ENCODE measurements at regions of chr7 and their contacts with region 1.

Region 1: GRCh38 chr7:127819975-127820731 is 168.2 kb downstream of the SND1 start:
- DNase-seq: peak; percentile 40 to 61 (median 50)
- ATAC-seq: peak; percentile 27
- H3K4me3 ChIP-seq: no peak overlapping the region
- H3K27ac ChIP-seq: peak overlapping the region; percentile 18
- H3K4me1 ChIP-seq: peaks cover 0 to 46% of the 10 kb centered on the region in 2 experiments
- H3K27me3 ChIP-seq: no peaks in the 10 kb centered on the region
- CTCF ChIP-seq: no peak
- EP300 ChIP-seq: 0 out of 2 replicates have a peak, but pooled peaks have one; percentile 5
- POLR2A ChIP-seq: no peak
- RAD21 ChIP-seq: no peak

Region 2: DNA sequence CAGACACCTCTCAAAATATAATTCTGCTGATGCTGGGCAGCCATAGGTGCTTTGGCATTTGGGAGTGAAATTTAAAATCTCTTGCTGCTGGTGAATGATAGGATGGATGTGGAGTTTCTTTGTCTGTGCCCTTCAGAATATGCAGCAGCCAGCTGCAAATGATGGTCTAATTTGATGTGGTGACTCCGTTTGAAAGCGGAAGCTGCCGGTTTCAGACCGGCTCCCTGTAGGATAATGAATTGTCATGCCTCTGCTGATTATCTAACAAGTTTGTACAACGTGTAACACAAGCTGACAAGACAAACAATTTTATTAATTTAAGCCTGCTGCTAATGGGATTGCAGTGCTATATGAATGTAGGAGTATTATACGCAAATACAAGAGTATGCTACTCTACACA is 64.6 kb before region 1 on chr7:
- CTCF ChIA-PET with region 1: no interaction called
- POLR2A ChIA-PET with region 1: no interaction called
- in situ Hi-C with region 1: no loop called
- intact Hi-C with region 1: no loop called
- DNase-seq: no peak
- ATAC-seq: no peak
- H3K4me3 ChIP-seq: no peak overlapping the region
- H3K27ac ChIP-seq: no peak overlapping the region
- H3K4me1 ChIP-seq: peaks cover 3 to 7% of the 10 kb centered on the region in 2 experiments; a peak in 2 of 5 replicates
- H3K27me3 ChIP-seq: no peaks in the 10 kb centered on the region
- CTCF ChIP-seq: no peak
- EP300 ChIP-seq: no peak
- POLR2A ChIP-seq: no peak
- RAD21 ChIP-seq: no peak

Region 3: DNA sequence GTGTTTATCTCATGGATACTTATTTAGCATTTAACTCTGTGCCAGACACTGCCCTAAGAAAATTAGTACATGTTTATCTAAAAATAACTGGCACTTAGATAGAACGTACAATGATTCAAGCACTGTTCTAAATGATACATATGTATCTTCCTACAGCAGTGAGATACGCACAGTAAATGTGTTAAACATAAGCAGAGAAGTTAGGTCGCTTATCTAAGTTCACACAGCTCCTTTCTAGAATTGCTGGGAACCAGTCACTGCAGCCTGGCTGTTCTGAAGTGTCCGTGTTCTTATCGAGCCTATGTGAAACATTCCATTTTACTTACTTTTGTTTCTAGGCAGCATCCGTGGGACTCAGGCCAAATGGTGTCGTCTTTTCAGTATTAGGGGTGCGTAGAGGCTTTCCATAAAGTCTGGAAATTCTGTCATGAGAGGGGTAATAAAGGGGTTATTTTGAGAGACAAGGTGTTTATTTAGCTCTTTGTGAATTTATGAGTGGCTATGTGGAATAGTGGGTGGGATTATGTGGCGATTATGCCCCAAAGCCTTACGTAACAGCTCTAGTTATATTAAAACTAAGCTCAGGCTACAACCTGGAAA is 18.8 kb after region 1 on chr7:
- CTCF ChIA-PET with region 1: no interaction called
- POLR2A ChIA-PET with region 1: interaction called, 8 read pairs
- in situ Hi-C with region 1: no loop called
- intact Hi-C with region 1: loop called (anchors 1 kb)
- DNase-seq: peak; percentile 57 to 94 (median 78)
- ATAC-seq: peak; percentile 98
- H3K4me3 ChIP-seq: no peak overlapping the region
- H3K27ac ChIP-seq: peak overlapping the region; percentile 55
- H3K4me1 ChIP-seq: peaks cover 0 to 24% of the 10 kb centered on the region in 2 experiments; a peak in 4 of 5 replicates
- H3K27me3 ChIP-seq: no peaks in the 10 kb centered on the region
- CTCF ChIP-seq: no peak
- EP300 ChIP-seq: peak; percentile 92
- POLR2A ChIP-seq: no peak
- RAD21 ChIP-seq: peak in 1 of 2 experiments; percentile 21; a peak in 2 of 4 replicates

Region 4: DNA sequence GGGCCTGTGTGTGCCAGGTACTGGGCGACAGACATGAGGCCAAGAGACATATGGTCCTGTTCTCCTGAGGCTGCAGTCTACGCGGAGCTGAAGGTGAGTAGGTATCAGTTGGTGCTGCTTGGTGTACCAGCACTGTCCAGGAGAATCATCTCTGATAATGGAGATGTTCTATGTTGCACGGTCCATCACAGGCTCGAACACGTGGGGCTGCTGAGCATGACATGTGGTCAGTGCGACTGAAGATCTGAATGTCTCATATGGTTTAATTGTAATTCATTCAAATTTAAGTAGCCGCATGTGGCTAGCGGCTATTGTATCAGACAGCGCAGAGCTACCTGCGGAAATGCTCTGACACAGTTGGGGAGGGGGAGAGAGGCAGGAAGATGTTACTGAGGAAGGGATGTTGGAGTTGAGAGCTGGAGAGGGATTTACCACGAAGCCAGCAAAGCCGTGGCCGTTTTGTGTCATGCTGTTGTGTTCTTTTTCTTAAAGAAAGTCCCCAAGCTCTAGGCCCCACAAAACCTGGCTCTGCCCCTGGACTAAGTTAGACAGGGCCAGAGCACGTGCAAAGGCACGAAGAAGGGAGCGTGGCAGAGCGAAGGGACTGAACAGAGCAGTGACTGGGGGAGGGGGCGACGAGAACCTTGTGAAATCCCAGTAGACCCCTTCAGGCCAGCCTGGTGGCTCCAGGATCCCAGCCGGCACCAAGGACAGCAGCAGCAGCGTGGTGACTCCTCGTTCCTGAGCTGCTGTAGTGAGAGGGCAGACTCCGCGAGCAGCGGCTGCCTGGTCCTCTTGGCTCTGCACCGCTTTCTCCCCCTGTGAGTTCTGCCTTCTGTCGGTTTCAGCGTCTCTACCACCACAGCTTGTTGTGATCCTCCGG is 1702.2 kb after region 1 on chr7:
- CTCF ChIA-PET with region 1: no interaction called
- POLR2A ChIA-PET with region 1: no interaction called
- in situ Hi-C with region 1: loop called (anchors 10 kb)
- intact Hi-C with region 1: no loop called
- DNase-seq: peak in 1 of 4 experiments; percentile 28
- ATAC-seq: peak; percentile 65
- H3K4me3 ChIP-seq: no peak overlapping the region
- H3K27ac ChIP-seq: no peak overlapping the region
- H3K4me1 ChIP-seq: peaks cover 6 to 11% of the 10 kb centered on the region in 2 experiments; a peak in 3 of 5 replicates
- H3K27me3 ChIP-seq: peaks cover 16 to 41% of the 10 kb centered on the region in 2 experiments; a peak in 3 of 5 replicates
- CTCF ChIP-seq: no peak
- EP300 ChIP-seq: no peak
- POLR2A ChIP-seq: no peak
- RAD21 ChIP-seq: no peak

Measured in K562 (cell line).